Motor neuron (in vitro differentiated cells): ENCODE measurements at regions of chr3 and their contacts with region 1.

Region 1: DNA sequence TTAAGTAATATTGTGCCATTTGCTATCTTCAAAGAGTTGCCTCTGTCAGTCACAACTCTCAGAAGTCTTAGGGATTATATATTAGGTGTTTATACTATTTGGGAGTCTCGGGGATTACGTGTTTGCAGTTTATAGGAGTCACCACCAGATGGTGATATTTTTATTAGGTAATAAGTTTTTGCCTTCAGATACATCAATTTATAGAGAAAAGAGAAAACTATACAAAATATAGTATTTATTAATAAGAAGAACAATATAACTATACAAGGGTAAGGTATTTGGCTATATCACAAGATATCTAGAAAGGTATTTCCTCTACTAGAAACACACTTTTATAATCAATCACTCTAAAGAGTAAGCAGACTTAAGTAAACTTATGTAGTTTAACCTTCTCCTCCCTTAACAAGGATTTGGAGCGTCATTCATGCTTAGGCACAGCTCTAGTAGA is 10.7 kb upstream of the DHX36 start:
- ATAC-seq: peak in 2 of 8 experiments; percentile 18 to 28
- H3K4me3 ChIP-seq: no peak overlapping the region
- H3K27ac ChIP-seq: no peak overlapping the region
- H3K4me1 ChIP-seq: no peaks in the 10 kb centered on the region

Region 2: DNA sequence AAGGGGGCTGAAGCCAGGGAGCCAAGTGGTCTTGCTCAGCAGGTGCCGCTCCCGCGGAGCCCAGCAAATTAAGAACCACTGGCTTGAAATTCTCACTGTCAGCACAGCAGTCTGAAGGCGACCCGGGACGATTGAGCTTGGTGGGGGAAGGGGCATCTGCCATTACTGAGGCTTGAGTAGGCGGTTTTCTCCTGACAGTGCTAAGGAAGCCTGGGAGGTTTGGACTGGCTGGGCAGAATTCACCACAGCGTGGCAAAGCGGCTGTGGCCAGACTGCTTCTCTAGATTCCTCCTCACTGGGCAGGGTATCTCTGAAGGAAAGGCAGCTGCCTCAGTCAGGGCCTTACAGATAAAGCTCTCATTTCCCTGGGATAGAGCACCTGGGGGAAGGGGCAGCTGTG is 152.0 kb after region 1 on chr3:
- in situ Hi-C with region 1: no loop called
- ATAC-seq: no peak
- H3K4me3 ChIP-seq: no peak overlapping the region
- H3K27ac ChIP-seq: no peak overlapping the region
- H3K4me1 ChIP-seq: no peaks in the 10 kb centered on the region

Region 3: DNA sequence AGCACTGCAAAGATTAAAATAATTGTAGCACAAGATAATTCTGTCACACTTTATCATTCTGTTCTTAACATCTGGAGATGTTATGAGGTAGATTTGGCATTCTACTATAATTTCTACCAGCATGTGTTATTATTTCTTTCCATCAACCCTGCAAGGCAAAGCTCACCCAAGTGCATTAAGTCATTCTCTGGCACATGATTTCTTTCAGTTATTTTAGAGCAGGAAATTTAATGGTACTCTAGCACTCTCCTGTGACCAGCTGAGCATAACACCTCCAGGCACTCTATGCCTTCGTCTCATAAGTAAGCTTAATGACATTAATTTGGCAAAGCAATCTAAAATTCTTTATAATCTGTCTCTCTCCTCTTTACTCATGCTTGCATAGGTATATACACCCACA is 395.2 kb after region 1 on chr3:
- in situ Hi-C with region 1: loop called in 3 of 9 experiments (anchors 10 to 25 kb)
- ATAC-seq: peak; percentile 56 to 88 (median 74)
- H3K4me3 ChIP-seq: no peak overlapping the region
- H3K27ac ChIP-seq: no peak overlapping the region
- H3K4me1 ChIP-seq: peaks cover 0 to 7% of the 10 kb centered on the region in 2 donors